Adrenal gland (tissue), 19 donors: ENCODE measurements at regions of chr16 and their contacts with region 1.

Region 1: DNA sequence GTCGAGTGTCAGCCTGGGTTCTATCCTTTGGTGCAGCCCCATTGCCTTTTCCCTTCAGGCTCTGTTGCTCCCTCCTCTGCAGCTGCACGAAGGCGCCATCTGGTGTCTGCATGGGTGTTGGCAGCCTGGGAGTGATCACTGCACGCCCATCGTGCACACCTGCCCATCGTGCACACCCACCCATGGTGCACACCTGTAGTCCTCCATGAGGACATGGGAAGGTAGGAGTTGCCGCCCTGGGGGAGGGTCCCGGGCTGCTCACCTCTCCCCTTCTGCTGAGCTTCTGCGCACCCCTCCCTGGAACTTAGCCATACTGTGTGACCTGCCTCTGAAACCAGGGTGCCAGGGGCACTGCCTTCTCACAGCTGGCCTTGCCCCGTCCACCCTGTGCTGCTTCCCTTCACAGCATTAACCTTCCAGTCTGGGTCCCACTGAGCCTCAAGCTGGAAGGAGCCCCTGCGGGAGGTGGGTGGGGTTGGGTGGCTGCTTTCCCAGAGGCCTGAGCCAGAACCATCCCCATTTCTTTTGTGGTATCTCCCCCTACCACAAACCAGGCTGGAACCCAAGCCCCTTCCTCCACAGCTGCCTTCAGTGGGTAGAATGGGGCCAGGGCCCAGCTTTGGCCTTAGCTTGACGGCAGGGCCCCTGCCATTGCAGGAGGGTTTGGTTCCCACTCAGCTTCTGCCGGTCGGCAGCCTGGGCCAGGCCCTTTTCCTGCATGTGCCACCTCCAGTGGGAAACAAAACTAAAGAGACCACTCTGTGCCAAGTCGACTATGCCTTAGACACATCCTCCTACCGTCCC is 2.9 kb downstream of the CTRL start:
- DNase-seq: peak; percentile 71 to 84 (median 76)
- H3K4me3 ChIP-seq: no peak overlapping the region
- H3K27ac ChIP-seq: no peak overlapping the region
- H3K4me1 ChIP-seq: peaks cover 0 to 8% of the 10 kb centered on the region in 2 donors
- H3K27me3 ChIP-seq: no peaks in the 10 kb centered on the region
- CTCF ChIP-seq: peak; percentile 71 to 95 (median 88)
- POLR2A ChIP-seq: no peak

Region 2: DNA sequence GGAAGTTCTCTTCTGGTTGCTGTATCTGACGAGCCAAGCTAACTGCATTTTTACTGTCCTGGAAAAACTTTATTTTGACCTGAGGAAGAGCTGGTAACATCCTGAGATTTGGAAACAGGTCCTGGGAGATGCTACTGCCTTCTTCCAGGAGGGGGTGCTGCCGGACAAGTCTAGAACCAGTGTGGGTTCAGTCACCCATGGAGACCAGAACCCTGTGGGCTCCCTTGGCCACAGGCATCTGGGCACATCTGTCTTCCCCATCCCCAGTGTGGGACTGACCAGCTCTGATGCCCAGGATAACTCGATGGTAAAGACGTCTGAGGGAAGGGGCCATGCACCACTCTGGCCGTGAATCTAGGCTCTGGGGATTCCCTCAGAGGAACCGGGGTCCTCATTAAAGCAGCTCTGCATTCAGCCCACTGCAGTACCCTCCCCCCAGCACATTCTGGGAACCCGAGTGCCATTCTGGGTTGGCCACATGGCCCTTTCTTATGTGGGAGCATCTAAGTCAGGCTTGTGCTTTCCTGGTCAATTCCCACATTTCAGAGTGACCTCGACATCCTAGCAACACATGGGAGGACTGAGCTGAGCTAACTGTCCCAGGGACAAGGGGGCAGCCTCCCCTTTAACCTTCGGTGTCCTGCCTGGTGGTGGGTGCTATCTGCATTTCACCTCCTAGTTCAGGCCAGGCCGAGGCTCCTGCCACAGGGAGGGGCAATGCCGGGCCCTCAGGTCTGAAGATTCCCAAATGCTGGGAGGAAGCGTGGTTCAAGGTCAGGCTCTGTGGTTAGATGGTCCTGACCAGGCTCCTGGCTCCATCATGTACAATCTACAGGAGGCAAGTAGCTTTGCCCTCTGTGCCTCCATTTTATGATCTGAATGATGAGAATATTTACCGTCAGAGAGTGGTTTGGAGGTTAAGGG is 255.8 kb before region 1 on chr16:
- intact Hi-C with region 1: loop called (anchors 5 to 10 kb)
- DNase-seq: peak; percentile 74 to 90 (median 82)
- H3K4me3 ChIP-seq: no peak overlapping the region
- H3K27ac ChIP-seq: peak overlapping the region; percentile 10 to 87 (median 47)
- H3K4me1 ChIP-seq: peaks cover 12 to 29% of the 10 kb centered on the region in 2 donors
- H3K27me3 ChIP-seq: no peaks in the 10 kb centered on the region
- CTCF ChIP-seq: peak; percentile 66 to 88 (median 82)
- POLR2A ChIP-seq: no peak

Region 3: DNA sequence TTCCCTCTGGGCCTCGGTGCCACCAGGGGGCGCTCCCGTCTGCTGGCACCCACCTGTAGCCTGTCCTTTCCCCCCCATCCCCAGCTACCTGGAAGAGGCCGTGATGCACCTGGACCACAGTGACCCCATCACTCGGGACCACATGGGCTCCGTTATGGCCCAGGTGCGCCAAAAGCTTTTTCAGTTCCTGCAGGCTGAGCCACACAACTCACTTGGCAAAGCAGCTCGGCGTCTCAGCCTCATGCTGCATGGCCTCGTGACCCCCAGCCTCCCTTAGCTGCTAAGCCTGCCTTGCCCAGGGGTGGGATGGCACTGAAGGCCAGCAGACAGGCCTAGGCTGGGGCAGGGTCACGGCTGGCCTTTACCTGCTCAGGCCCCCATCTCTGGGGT is 44.9 kb before region 1 on chr16:
- intact Hi-C with region 1: loop called (anchors 5 kb)
- DNase-seq: peak; percentile 36 to 72 (median 61)
- H3K4me3 ChIP-seq: no peak overlapping the region
- H3K27ac ChIP-seq: peak overlapping the region in 4 of 5 donors; percentile 4 to 83 (median 54)
- H3K4me1 ChIP-seq: peaks cover 11 to 32% of the 10 kb centered on the region in 2 donors
- H3K27me3 ChIP-seq: no peaks in the 10 kb centered on the region
- CTCF ChIP-seq: peak; percentile 58 to 81 (median 76)
- POLR2A ChIP-seq: no peak

Region 4: GRCh38 chr16:67979955-67980678 is 51.4 kb after region 1 on chr16 and contains the start of gene DPEP3:
- intact Hi-C with region 1: no loop called
- DNase-seq: no peak
- H3K4me3 ChIP-seq: no peak within 1 kb of the TSS
- H3K27ac ChIP-seq: no peak within 1 kb of the TSS
- H3K4me1 ChIP-seq: peaks cover 0 to 15% of the 10 kb centered on the region in 2 donors
- H3K27me3 ChIP-seq: no peaks in the 10 kb centered on the region
- CTCF ChIP-seq: no peak
- POLR2A ChIP-seq: no peak
- total RNA-seq, gene DPEP3: 0.11 TPM in 1 of 9 donors, not detected in the others